ENCODE measurements at regions of chr1 and their contacts with region 1.

Region 1: DNA sequence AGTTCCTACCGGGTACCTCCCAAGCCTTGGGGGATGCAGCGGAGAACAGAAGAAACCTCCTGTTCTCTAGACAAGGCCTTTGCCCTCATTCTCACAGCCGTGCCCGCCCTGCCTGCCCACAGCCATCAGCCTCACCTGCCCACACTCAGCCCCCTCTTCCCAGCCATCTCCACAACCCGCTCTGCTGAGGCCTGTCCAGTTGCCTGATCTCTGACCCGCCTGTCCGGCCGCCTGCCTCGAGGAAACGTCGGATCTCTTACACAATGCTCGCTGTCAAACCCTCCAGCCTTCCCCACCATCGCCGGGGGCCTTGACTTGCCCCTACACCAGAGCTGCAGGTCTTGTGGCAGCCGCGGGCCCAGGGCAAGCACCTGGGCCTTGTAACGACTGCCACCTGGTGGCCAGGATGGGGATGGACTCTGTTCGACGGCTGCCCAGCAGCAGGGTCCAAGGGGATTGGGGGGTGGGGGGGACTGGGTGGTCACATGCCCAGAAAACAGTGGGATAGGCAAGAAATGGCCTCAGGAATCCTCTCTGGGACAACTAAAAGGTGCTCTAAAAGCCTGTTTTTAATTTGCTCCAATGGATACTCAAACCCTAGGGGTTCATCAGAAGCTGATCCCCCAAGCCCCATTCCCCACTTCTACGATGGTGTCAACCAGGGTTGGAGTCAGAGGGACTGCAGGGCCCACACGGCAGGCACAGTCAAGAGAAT is 31.0 kb downstream of the SLC45A1 start:
- DNase-seq: peak; percentile 67 to 85
- H3K4me3 ChIP-seq: no peak overlapping the region
- H3K27ac ChIP-seq: peak overlapping the region in 1 of 2 donors; percentile 15
- H3K4me1 ChIP-seq: peaks cover 0 to 38% (median 21%) of the 10 kb centered on the region in 4 donors
- H3K27me3 ChIP-seq: no peaks in the 10 kb centered on the region
- CTCF ChIP-seq: peak; percentile 90 to 91

Region 2: GRCh38 chr1:7975212-7975865 is 373.6 kb before region 1 on chr1:
- intact Hi-C with region 1: loop called (anchors 5 kb)
- DNase-seq: peak; percentile 55 to 78
- H3K4me3 ChIP-seq: no peak overlapping the region
- H3K27ac ChIP-seq: no peak overlapping the region
- H3K4me1 ChIP-seq: peaks cover 0 to 4% (median 0%) of the 10 kb centered on the region in 4 donors
- H3K27me3 ChIP-seq: no peaks in the 10 kb centered on the region
- CTCF ChIP-seq: peak; percentile 89 to 90

Region 3: DNA sequence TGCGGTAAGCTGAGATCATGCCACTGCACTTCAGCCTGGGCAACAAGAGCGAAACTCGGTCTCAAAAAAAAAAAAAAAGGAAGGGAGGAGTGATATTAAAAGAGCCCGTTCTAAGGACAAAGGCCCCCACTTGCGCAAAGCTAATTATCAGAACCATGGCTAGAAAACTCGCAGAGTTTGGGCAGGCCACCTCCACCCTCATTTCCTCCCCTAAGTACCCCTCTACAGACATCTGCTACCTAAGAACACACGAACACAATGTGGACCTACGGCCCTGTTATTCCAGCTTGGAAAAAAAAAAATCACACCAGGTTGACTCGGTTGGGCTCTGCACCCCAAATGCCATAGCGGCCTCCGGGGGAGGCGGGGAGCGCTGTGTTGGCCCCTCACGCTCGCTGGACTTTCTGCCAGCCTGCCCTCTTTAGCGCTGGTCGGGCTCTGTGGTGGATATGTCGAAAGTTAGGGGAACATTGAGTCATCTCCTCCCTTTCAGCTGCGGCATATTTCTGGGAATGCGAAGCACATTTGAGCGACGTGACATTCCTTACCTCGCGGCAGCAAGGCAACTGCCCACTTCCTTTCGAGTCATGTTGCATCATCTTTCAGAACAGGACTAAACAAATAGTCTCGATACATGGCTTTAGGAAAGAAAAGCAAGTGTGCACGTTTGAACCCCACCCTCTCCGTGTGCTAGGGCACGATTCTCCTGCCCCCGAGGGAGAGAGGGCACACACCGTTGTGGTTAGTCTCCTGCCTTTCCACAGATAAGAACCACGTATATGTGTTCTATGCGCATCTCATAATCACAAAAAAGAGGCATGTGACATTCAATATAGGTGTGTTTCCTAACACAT is 137.1 kb before region 1 on chr1:
- intact Hi-C with region 1: no loop called
- DNase-seq: peak; percentile 70 to 89
- H3K4me3 ChIP-seq: no peak overlapping the region
- H3K27ac ChIP-seq: peak overlapping the region; percentile 71 to 82
- H3K4me1 ChIP-seq: peaks cover 0 to 33% (median 11%) of the 10 kb centered on the region in 4 donors
- H3K27me3 ChIP-seq: no peaks in the 10 kb centered on the region
- CTCF ChIP-seq: no peak